ENCODE measurements at regions of chr1 and their contacts with region 1.

Region 1: GRCh38 chr1:200184196-200184595 is 156.7 kb downstream of the NR5A2 start:
- DNase-seq: peak; percentile 92 to 97
- ATAC-seq: peak; percentile 98 to 100
- H3K4me3 ChIP-seq: no peak overlapping the region
- H3K27ac ChIP-seq: peak overlapping the region; percentile 74 to 83 (median 82)
- H3K4me1 ChIP-seq: peaks cover 20 to 21% of the 10 kb centered on the region in 2 donors
- H3K27me3 ChIP-seq: no peaks in the 10 kb centered on the region
- CTCF ChIP-seq: no peak
- POLR2A ChIP-seq: no peak

Region 2: GRCh38 chr1:200242110-200243041 is 58.2 kb after region 1 on chr1:
- in situ Hi-C with region 1: no loop called
- intact Hi-C with region 1: loop called (anchors 5 kb)
- DNase-seq: no peak
- ATAC-seq: peak; percentile 39 to 58
- H3K4me3 ChIP-seq: peak overlapping the region; percentile 22 to 38 (median 32)
- H3K27ac ChIP-seq: peak overlapping the region; percentile 25 to 68 (median 51)
- H3K4me1 ChIP-seq: peaks cover 5 to 16% of the 10 kb centered on the region in 2 donors
- H3K27me3 ChIP-seq: peaks cover 4 to 20% (median 4%) of the 10 kb centered on the region in 3 donors
- CTCF ChIP-seq: no peak
- POLR2A ChIP-seq: no peak

Region 3: DNA sequence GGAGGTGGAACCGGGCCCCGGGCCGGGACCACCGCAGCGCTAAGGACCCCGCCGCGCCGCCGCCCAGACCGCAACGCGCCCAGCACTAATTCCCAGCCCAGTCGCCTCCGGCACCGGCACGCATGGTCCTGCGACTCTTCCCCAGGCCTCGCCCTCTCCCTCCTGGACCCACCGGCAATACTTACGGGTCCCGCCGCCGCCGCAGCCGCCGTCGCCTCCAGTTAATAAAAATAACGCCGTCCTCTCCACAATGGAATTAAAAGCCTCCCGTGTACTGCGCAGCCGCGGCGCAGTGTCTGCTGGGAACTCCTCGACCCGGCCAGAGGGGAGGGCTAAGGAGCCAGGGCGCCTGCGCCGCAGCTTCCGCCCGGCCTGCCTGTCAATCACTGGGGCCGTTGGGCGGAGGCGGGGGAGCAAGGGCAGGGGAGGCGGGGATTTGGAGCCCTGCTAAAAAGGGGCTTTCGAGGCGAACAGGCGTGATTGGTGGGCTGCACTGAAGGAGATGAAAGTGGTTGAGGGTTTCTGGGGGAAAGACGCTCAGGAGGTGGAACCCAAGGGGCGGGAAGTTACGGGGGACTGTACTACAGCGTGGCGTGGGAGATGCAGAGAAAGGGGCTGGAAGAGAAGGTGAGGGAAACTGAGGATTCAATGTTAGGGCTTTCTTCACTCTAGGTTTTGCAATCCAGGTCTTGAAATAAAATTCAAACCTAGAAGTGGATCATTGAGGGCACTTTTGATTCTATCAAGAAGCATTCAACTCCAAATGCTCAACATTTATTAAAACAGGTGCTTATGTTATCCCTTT is 225.8 kb after region 1 on chr1 and contains the start of gene ZNF281:
- in situ Hi-C with region 1: no loop called
- intact Hi-C with region 1: loop called (anchors 2 kb)
- DNase-seq: peak; percentile 86 to 92
- ATAC-seq: peak; percentile 96
- H3K4me3 ChIP-seq: peak within 1 kb of the TSS; percentile 87 to 96 (median 95)
- H3K27ac ChIP-seq: peak within 1 kb of the TSS; percentile 90 to 96 (median 95)
- H3K4me1 ChIP-seq: peaks cover 45 to 51% of the 10 kb centered on the region in 2 donors
- H3K27me3 ChIP-seq: no peaks in the 10 kb centered on the region
- CTCF ChIP-seq: no peak
- POLR2A ChIP-seq: peak; percentile 76 to 80
- total RNA-seq, gene ZNF281: 4.9 to 12.4 (median 9.8) TPM

Measured in gastrocnemius medialis (tissue), 4 donors.